CD4-positive, alpha-beta T cell (primary cell): ENCODE measurements at regions of chr11 and their contacts with region 1.

Region 1: DNA sequence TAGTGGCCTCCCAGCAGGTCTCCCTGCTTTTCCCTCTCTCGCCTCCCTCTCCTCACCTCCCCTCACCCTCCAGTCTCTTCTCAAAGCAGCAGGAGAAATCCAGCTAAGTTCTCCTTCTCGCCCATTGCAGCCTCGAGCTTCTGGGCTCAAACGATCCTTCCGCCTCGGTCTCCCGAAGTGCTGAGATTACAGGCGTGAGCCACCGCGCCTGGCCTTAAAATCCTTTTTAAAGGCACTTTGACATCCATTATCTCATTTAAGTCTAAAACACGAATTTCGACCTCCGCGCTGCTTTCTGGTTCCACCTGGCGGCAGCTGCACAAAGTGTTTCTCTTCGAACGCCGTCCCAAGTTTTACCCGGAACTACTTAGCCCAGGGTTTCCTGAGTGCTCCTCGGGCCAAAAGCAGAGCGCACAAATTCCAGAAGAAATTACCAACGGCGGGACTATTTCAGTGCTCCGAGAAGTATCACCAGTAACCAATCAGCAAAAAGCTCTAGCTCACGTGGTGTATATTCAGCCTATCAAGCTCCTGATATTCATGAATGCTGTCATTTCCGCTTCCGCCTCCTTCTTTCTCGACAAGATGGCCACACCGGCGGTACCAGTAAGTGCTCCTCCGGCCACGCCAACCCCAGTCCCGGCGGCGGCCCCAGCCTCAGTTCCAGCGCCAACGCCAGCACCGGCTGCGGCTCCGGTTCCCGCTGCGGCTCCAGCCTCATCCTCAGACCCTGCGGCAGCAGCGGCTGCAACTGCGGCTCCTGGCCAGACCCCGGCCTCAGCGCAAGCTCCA is at the start of gene EIF3F:
- DNase-seq: peak; percentile 78 to 99 (median 85)
- ATAC-seq: peak; percentile 95
- H3K4me3 ChIP-seq: peak within 1 kb of the TSS; percentile 67
- H3K4me3 Mint-ChIP-seq: peak within 1 kb of the TSS; percentile 88
- H3K27ac ChIP-seq: peak within 1 kb of the TSS; percentile 52 to 73
- H3K27ac Mint-ChIP-seq: peak within 1 kb of the TSS; percentile 79
- H3K4me1 ChIP-seq: peaks cover 27% of the 10 kb centered on the region
- H3K4me1 Mint-ChIP-seq: peaks cover 47% of the 10 kb centered on the region
- H3K27me3 ChIP-seq: no peaks in the 10 kb centered on the region
- H3K27me3 Mint-ChIP-seq: no peaks in the 10 kb centered on the region
- CTCF ChIP-seq: peak; percentile 92
- total RNA-seq, gene EIF3F: 338 to 348 TPM

Region 2: DNA sequence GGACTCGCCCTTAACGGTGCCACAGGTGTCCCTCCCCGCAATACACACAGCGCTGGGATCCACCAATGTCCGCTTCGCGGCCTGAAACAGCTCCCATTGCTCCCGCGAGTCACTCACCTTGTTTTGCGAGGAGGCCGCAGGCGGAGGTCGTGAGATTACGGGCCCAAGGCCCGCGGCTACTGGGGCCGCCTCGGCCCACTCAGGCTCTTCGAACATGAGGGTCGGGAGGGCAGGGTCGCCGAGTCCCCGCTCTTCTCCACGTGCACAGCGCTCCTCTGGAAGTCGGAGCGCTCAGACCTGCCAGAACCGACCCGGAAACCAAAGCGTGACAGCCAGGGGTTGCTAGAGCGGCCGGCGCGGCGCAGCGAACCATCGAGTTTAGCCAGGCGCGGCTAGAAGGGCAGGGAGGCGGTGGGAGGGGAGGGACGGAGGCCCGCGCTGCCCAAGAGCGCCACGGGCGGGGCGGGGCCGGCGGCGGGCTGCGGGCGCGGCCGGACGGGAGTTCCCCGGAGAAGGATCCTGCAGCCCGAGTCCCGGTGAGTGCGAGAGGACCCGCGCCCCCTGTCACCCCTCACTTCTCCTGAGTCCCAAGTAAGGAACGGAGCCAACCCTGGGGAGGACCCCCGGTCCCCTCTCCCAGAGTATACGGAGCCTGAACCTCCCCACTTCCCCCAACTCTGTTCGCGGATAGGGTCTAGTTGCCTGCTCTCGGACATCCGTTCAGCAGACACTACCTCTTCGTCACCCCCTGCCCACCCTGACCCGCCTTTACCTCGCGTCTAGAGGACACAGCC is 1383.5 kb before region 1 on chr11 and contains the starts of genes ILK and RRP8:
- CTCF ChIA-PET with region 1: no interaction called
- POLR2A ChIA-PET with region 1: no interaction called
- intact Hi-C with region 1: loop called in 1 of 2 experiments (anchors 5 kb)
- DNase-seq: peak; percentile 73 to 94 (median 83)
- ATAC-seq: peak; percentile 75
- H3K4me3 ChIP-seq: peak within 1 kb of the TSS; percentile 78
- H3K4me3 Mint-ChIP-seq: no peak within 1 kb of the TSS
- H3K27ac ChIP-seq: peak within 1 kb of the TSS; percentile 81 to 87
- H3K27ac Mint-ChIP-seq: no peak within 1 kb of the TSS
- H3K4me1 ChIP-seq: peaks cover 73% of the 10 kb centered on the region
- H3K4me1 Mint-ChIP-seq: peaks cover 22% of the 10 kb centered on the region
- H3K27me3 ChIP-seq: no peaks in the 10 kb centered on the region
- H3K27me3 Mint-ChIP-seq: no peaks in the 10 kb centered on the region
- CTCF ChIP-seq: no peak
- total RNA-seq, gene ILK: 19.2 to 21.0 TPM
- total RNA-seq, gene RRP8: 25.7 to 27.3 TPM

Region 3: DNA sequence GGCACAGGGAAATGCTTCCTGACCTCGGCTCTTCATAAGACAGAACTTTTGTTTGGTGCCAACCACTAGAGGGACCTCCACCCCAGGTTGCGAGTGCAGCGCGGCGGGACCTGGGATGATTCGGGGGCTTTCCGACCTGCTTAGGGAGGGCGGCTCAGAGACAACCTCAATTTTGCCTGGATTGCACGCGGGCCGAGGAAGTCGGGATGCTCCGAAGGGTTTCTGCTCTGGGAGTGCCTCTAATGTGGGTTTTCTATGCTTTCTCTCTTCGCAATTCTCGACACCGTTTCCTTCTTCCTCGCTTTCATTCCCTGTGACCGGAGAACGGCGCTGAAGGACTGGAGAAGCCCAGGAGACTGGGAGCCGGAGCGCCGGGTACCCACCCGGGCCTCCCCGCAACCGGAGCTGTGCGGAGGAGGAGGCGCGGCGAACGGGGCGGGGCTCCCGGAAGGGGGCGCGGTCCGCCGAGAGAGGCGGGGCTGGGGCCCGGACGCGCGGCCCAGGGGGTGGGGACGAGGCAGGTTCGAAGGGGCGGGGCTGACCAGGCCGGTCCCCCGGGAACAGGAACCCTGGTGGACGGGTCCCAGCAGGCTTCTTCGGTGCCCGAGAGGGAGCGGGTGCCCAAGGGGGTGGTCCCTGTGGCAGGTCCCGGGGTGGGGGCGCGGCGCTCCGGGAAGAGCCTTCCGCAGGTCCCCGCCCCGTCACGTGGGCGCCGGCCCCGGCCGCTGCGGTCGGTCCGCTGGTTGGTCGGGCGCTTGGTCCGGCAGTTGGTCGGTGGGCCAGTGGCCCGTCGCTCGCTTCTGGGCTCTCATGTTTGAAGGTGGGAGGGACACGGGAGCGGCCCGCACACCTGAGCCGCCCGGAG is 473.5 kb before region 1 on chr11 and contains the start of gene PPFIBP2:
- CTCF ChIA-PET with region 1: interaction called, 3 read pairs
- POLR2A ChIA-PET with region 1: no interaction called
- intact Hi-C with region 1: loop called (anchors 5 kb)
- DNase-seq: peak; percentile 70 to 91 (median 80)
- ATAC-seq: peak; percentile 86
- H3K4me3 ChIP-seq: peak within 1 kb of the TSS; percentile 99
- H3K4me3 Mint-ChIP-seq: peak within 1 kb of the TSS; percentile 99
- H3K27ac ChIP-seq: peak within 1 kb of the TSS; percentile 81 to 84
- H3K27ac Mint-ChIP-seq: peak within 1 kb of the TSS; percentile 97
- H3K4me1 ChIP-seq: peaks cover 18% of the 10 kb centered on the region
- H3K4me1 Mint-ChIP-seq: peaks cover 64% of the 10 kb centered on the region
- H3K27me3 ChIP-seq: no peaks in the 10 kb centered on the region
- H3K27me3 Mint-ChIP-seq: no peaks in the 10 kb centered on the region
- CTCF ChIP-seq: peak; percentile 92
- total RNA-seq, gene PPFIBP2: 27.0 to 35.9 TPM

Region 4: GRCh38 chr11:7582338-7582985 is 404.5 kb before region 1 on chr11:
- CTCF ChIA-PET with region 1: no interaction called
- POLR2A ChIA-PET with region 1: no interaction called
- intact Hi-C with region 1: no loop called
- DNase-seq: no peak
- ATAC-seq: no peak
- H3K4me3 ChIP-seq: no peak overlapping the region
- H3K4me3 Mint-ChIP-seq: no peak overlapping the region
- H3K27ac ChIP-seq: no peak overlapping the region
- H3K27ac Mint-ChIP-seq: no peak overlapping the region
- H3K4me1 ChIP-seq: peaks cover 10% of the 10 kb centered on the region
- H3K4me1 Mint-ChIP-seq: peaks cover 17% of the 10 kb centered on the region
- H3K27me3 ChIP-seq: peaks cover 0 to 4% of the 10 kb centered on the region in 2 experiments
- H3K27me3 Mint-ChIP-seq: peaks cover 6% of the 10 kb centered on the region
- CTCF ChIP-seq: no peak

Region 5: GRCh38 chr11:7892840-7893254 is 94.1 kb before region 1 on chr11:
- CTCF ChIA-PET with region 1: interaction called, 25 read pairs
- POLR2A ChIA-PET with region 1: interaction called, 6 read pairs
- intact Hi-C with region 1: loop called (anchors 1 kb)
- DNase-seq: peak in 4 of 14 experiments; percentile 3 to 57 (median 50)
- ATAC-seq: peak; percentile 67
- H3K4me3 ChIP-seq: no peak overlapping the region
- H3K4me3 Mint-ChIP-seq: no peak overlapping the region
- H3K27ac ChIP-seq: no peak overlapping the region
- H3K27ac Mint-ChIP-seq: no peak overlapping the region
- H3K4me1 ChIP-seq: no peaks in the 10 kb centered on the region
- H3K4me1 Mint-ChIP-seq: peaks cover 7% of the 10 kb centered on the region
- H3K27me3 ChIP-seq: no peaks in the 10 kb centered on the region
- H3K27me3 Mint-ChIP-seq: peaks cover 4% of the 10 kb centered on the region
- CTCF ChIP-seq: peak; percentile 73

Region 6: GRCh38 chr11:8682303-8683114 is 695.5 kb after region 1 on chr11 and contains the starts of genes RPL27A and TRIM66:
- CTCF ChIA-PET with region 1: no interaction called
- POLR2A ChIA-PET with region 1: interaction called, 6 read pairs
- intact Hi-C with region 1: loop called in 1 of 2 experiments (anchors 2 kb)
- DNase-seq: peak; percentile 97 to 100 (median 99)
- ATAC-seq: peak; percentile 94
- H3K4me3 ChIP-seq: peak within 1 kb of the TSS; percentile 93
- H3K4me3 Mint-ChIP-seq: peak within 1 kb of the TSS; percentile 99
- H3K27ac ChIP-seq: peak within 1 kb of the TSS; percentile 92 to 96
- H3K27ac Mint-ChIP-seq: peak within 1 kb of the TSS; percentile 99
- H3K4me1 ChIP-seq: peaks cover 29% of the 10 kb centered on the region
- H3K4me1 Mint-ChIP-seq: peaks cover 52% of the 10 kb centered on the region
- H3K27me3 ChIP-seq: no peaks in the 10 kb centered on the region
- H3K27me3 Mint-ChIP-seq: no peaks in the 10 kb centered on the region
- CTCF ChIP-seq: no peak
- total RNA-seq, gene RPL27A: 1,667 to 1,721 TPM
- total RNA-seq, gene TRIM66: 6.8 to 9.8 TPM